GM10248 (cell line): ENCODE measurements at regions of chr2 and their contacts with region 1.

Region 1: DNA sequence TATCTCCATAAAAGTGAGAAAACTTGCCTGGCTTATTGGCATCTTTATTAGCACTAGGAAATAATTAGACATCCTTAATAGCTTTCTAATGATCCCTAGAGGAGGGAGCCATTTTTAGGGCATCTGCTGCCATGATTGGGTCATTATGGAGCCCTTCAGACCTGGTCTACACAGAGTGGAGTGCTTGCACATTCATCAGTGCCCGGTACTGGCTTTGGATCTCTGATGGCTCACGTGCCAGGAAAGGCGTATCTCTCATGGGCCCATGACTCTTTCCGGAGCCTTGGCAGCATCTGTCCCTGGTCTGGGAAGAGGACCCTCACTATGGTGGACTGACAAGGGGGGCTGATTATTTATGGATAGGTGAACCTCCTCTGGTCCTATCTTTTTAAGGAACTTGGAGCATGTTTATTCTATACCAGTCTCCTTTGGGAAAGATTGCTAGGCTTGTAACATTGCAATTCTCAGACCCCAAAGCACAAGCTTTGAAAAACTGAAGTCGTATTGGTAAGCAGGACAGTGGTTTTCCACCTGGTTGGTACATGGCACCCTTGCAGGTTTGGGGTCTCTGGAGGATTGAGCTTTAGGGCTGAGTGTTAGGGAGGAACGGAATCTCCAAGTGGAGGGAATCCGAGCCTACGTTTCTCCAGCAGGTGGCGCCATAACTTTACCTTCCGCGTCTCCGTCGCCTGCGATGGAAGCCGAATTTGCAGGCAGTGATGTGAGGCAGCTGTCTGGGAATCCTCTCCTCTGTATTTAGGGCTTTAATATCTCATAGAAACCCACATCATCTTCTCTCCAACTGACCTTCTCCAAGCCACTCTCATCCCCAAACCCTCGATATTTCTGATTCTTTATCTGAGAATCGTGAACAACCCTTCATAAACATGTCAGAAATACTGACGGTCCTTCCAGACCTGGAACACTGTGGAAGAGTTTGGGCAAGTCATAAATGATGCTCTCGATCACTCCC is 27.8 kb downstream of the SIX2 start:
- DNase-seq: peak; percentile 75
- CTCF ChIP-seq: peak; percentile 81

Region 2: GRCh38 chr2:44886414-44886813 is 95.0 kb before region 1 on chr2:
- CTCF ChIA-PET with region 1: no interaction called
- POLR2A ChIA-PET with region 1: no interaction called
- DNase-seq: no peak
- CTCF ChIP-seq: no peak

Region 3: GRCh38 chr2:44912660-44913059 is 68.8 kb before region 1 on chr2:
- CTCF ChIA-PET with region 1: no interaction called
- POLR2A ChIA-PET with region 1: no interaction called
- DNase-seq: no peak
- CTCF ChIP-seq: no peak

Region 4: GRCh38 chr2:45000921-45001868 is 19.8 kb after region 1 on chr2:
- CTCF ChIA-PET with region 1: interaction called, 18 read pairs
- POLR2A ChIA-PET with region 1: no interaction called
- DNase-seq: no peak
- CTCF ChIP-seq: no peak

Region 5: DNA sequence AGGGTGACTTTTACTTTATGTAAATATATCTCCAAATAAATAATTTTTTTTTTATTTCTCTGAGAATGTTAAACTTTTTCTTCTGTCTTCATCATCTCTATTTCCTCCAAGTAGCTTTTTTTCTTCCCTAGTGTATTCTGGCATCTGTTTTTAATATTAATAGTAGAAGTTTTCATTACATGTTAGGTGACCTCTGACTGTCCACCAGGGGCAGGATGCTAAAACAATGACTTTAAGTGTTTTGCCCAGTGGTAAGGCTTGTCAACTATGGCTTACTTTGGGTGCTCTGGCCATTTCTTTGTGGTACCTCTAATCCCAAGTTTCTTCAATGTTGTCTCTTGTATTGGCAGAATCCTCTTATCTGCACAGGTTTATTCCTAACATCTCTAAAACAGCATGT is 502.6 kb after region 1 on chr2:
- CTCF ChIA-PET with region 1: interaction called, 14 read pairs
- POLR2A ChIA-PET with region 1: no interaction called
- DNase-seq: no peak
- CTCF ChIP-seq: peak; percentile 3

Region 6: GRCh38 chr2:45578056-45578809 is 596.8 kb after region 1 on chr2:
- CTCF ChIA-PET with region 1: interaction called, 30 read pairs
- POLR2A ChIA-PET with region 1: no interaction called
- DNase-seq: peak; percentile 10
- CTCF ChIP-seq: peak; percentile 43